ENCODE measurements at regions of chr6 and their contacts with region 1.

Region 1: GRCh38 chr6:132300323-132300949 is 100.8 kb downstream of the MOXD1 start:
- DNase-seq: no peak
- H3K4me3 Mint-ChIP-seq: no peak overlapping the region
- H3K27ac Mint-ChIP-seq: no peak overlapping the region
- H3K4me1 Mint-ChIP-seq: no peaks in the 10 kb centered on the region
- H3K27me3 Mint-ChIP-seq: peaks cover 25% of the 10 kb centered on the region

Region 2: GRCh38 chr6:132259070-132259469 is 41.4 kb before region 1 on chr6:
- intact Hi-C with region 1: no loop called
- DNase-seq: no peak
- H3K4me3 Mint-ChIP-seq: no peak overlapping the region
- H3K27ac Mint-ChIP-seq: no peak overlapping the region
- H3K4me1 Mint-ChIP-seq: no peaks in the 10 kb centered on the region
- H3K27me3 Mint-ChIP-seq: peaks cover 2% of the 10 kb centered on the region

Region 3: DNA sequence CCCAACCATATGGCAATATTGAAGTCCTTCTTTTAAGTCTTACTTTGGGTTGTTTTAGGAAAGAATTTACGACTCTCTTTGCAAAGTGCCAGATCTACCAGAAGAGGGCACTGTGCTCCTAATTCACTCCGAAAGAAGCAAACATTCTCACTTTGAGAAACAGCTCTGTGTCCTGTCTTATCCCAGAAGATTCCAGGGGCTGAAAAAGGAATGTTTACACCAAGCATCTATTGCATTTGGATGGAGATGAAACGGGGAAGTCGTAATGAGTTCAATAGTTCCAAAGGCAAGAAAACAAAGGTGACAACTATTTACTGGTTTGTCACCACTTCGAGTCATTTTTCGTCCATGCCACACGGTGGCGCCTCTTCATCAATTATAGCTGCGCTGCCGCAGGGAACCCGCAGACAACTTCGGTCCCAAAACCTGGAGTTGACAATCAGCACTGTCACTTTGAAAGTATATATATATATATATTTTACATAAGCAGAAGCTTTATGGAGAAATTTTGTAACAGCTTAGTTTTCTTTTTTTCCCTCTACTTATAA is 20.8 kb before region 1 on chr6:
- intact Hi-C with region 1: loop called (anchors 2 kb)
- DNase-seq: peak; percentile 60
- H3K4me3 Mint-ChIP-seq: peak overlapping the region; percentile 82
- H3K27ac Mint-ChIP-seq: no peak overlapping the region
- H3K4me1 Mint-ChIP-seq: peaks cover 2% of the 10 kb centered on the region
- H3K27me3 Mint-ChIP-seq: peaks cover 19% of the 10 kb centered on the region

Region 4: DNA sequence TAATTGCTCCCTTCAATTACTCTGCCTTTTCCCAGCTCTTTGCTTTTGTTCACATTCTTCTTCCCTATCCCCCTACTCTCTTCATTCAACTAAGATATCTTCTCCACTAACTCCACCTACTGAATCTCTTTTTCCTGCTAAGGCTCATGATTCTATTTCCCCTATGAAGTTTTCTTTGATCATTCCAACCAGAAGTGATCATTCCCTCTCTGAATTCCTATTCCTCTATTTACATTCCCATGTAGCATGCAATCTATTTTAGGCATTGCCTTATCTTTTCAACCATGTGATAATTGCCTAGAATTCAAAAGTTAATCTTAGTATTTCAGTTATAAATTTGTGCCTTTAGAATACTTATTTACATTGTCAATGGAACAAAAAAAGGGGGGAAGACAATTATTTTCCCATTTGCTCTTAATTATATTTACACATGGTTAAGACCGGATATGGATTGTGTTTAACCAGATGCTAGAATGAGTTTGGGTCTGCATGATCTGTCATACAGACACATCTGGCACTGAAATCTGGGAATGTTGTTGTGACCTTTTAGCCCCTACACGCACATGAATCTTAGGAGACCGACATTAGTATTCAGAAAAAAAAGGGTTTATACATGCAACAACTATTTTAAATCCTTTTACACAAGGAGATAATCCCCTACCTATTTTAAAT is 80.1 kb after region 1 on chr6:
- intact Hi-C with region 1: no loop called
- DNase-seq: no peak
- H3K4me3 Mint-ChIP-seq: no peak overlapping the region
- H3K27ac Mint-ChIP-seq: no peak overlapping the region
- H3K4me1 Mint-ChIP-seq: no peaks in the 10 kb centered on the region
- H3K27me3 Mint-ChIP-seq: peaks cover 27% of the 10 kb centered on the region

Region 5: GRCh38 chr6:132391391-132392271 is 91.2 kb after region 1 on chr6:
- intact Hi-C with region 1: loop called (anchors 5 kb)
- DNase-seq: no peak
- H3K4me3 Mint-ChIP-seq: no peak overlapping the region
- H3K27ac Mint-ChIP-seq: no peak overlapping the region
- H3K4me1 Mint-ChIP-seq: no peaks in the 10 kb centered on the region
- H3K27me3 Mint-ChIP-seq: peaks cover 30% of the 10 kb centered on the region

Region 6: DNA sequence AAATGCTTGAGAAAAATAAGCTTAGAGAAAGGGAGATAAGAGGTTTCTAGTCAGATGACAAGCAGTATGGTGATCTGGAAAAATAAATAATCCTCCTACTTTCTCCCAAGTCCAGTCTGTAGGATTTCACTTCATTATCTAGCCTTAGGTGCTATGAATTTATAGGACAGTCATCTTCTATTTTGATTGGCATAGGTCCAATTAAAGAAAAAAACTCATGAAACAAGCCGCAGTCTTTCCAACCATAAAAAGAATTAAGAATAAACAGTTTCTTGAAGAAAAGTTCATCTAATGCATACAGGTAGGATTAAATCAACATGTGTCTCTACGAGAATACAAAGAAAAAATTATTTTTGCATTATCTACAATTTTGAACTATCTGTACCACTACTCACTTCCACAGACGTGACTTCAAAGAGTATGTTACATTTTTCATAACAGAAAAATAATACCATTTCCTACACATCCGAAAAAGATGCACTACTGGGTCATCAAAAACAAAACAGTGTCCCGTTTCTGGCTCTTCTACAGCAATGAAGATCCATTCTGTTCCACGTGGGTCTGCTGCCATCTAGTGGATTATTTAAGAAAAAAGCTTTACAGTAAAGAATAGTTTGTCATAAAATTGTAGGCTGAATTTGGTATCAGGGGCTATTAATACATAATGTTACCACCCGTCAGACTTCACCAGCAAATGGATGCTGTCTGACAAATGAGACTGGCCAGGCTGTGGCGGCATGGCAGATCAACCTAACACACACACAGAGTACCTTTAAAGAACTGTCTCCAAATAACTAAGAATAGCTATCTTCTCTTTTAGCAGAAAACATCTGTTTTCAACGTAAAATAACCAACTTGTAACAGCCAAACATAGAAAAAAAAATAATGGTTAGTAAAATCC is 183.6 kb after region 1 on chr6:
- intact Hi-C with region 1: loop called (anchors 1 kb)
- DNase-seq: peak; percentile 15
- H3K4me3 Mint-ChIP-seq: no peak overlapping the region
- H3K27ac Mint-ChIP-seq: no peak overlapping the region
- H3K4me1 Mint-ChIP-seq: peaks cover 16% of the 10 kb centered on the region
- H3K27me3 Mint-ChIP-seq: peaks cover 4% of the 10 kb centered on the region

Measured in activated T-helper 2 cell treated with anti-CD3 and anti-CD28 coated beads, Interferon-gamma antibody, Interleukin-2, Interleukin-4, amounts not matched to agents 10 μg/mL and 5 μg/mL and 100 μg/mL, durations not matched to agents 14 hours and 24 hours and 36 hours (primary cell).